ENCODE measurements at regions of chr5 and their contacts with region 1.

Region 1: GRCh38 chr5:177403792-177404640 is 3.6 kb upstream of the PFN3 start:
- DNase-seq: peak; percentile 90
- H3K4me3 Mint-ChIP-seq: peak overlapping the region; percentile 71
- H3K27ac Mint-ChIP-seq: no peak overlapping the region
- H3K4me1 Mint-ChIP-seq: peaks cover 38% of the 10 kb centered on the region
- H3K27me3 Mint-ChIP-seq: peaks cover 95% of the 10 kb centered on the region

Region 2: DNA sequence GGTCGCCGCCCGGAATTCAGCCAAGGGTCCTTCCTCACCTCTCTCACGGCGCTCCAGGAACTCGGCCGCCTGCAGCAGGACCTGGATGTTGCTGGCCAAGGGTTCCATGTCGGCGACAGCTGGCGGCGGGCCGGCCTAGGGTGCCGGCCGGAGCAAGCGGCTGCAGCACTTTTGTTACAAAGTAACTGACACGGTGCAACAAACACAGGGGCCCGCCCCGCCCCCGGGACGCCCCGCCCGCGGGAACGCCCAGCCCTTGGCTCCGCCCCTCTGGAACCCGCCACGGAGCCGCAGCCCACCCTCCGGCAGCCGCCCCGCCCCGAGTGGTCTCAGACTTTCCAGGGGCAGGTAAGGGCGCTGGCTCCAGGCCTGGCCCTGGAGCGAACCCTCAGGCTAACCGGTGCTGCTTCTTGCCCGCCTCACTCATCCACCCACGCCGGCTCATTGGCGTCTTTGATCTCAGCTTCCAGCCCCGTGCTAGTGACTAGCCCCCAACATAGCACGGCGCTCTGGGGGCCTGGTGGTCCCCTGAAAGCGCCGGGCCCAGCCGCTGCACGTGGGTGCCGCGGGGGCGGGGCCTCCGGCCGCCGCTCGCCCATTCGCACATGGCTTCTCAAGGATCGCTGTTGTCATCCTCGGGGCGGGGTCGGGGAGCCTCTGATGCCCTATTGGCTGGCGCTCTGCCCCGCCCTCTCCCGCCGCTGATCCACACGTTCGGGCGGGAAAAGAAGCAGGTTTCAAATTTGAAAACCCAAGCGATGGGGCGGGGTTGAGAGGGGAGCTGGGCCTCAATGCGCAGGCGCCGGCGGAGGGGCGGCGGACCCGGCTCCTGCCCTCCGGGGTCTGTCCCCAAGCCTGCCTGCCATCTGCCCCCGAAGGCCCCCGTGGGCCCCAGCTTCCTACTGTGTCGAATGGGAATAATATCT is 92.0 kb before region 1 on chr5 and contains the start of gene MXD3:
- CTCF ChIA-PET with region 1: interaction called, 60 read pairs
- DNase-seq: peak; percentile 99
- H3K4me3 Mint-ChIP-seq: peak within 1 kb of the TSS; percentile 100
- H3K27ac Mint-ChIP-seq: peak within 1 kb of the TSS; percentile 94
- H3K4me1 Mint-ChIP-seq: peaks cover 57% of the 10 kb centered on the region
- H3K27me3 Mint-ChIP-seq: no peaks in the 10 kb centered on the region

Region 3: GRCh38 chr5:177425801-177426565 is 22.0 kb after region 1 on chr5:
- CTCF ChIA-PET with region 1: interaction called, 172 read pairs
- DNase-seq: peak; percentile 100
- H3K4me3 Mint-ChIP-seq: peak overlapping the region; percentile 86
- H3K27ac Mint-ChIP-seq: peak overlapping the region; percentile 97
- H3K4me1 Mint-ChIP-seq: peaks cover 50% of the 10 kb centered on the region
- H3K27me3 Mint-ChIP-seq: no peaks in the 10 kb centered on the region

Region 4: GRCh38 chr5:177446200-177447065 is 42.4 kb after region 1 on chr5 and contains the start of gene PRR7:
- CTCF ChIA-PET with region 1: interaction called, 228 read pairs
- DNase-seq: peak; percentile 77
- H3K4me3 Mint-ChIP-seq: peak within 1 kb of the TSS; percentile 64
- H3K27ac Mint-ChIP-seq: peak within 1 kb of the TSS; percentile 88
- H3K4me1 Mint-ChIP-seq: peaks cover 55% of the 10 kb centered on the region
- H3K27me3 Mint-ChIP-seq: peaks cover 41% of the 10 kb centered on the region

Region 5: GRCh38 chr5:177462021-177462670 is 58.1 kb after region 1 on chr5:
- CTCF ChIA-PET with region 1: interaction called, 33 read pairs
- DNase-seq: no peak
- H3K4me3 Mint-ChIP-seq: no peak overlapping the region
- H3K27ac Mint-ChIP-seq: peak overlapping the region; percentile 4
- H3K4me1 Mint-ChIP-seq: peaks cover 21% of the 10 kb centered on the region
- H3K27me3 Mint-ChIP-seq: peaks cover 14% of the 10 kb centered on the region